PC-3 (cell line): ENCODE measurements at regions of chr3 and their contacts with region 1.

Region 1: DNA sequence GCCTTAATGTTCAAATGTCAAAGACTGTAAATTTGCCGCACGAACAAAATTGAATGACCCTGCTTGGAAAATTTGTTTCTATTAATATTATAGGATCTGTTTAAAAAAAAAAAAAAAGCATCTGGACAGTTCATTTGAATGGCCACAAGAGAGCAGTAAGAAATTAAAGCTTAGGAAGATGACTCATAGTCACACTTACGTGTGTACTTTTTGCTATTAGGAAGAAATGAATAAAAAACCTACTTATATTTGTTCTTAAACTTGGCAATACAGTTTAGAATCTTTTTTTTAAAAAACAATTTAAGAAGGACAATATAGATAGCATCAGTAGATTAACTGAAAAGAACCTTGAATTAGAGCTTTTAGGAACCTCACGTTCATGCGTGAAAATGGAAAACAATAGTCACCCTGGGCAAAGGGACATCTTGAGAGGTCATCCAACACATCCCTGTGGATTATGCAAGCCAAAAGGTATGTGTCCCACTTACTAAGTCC is 621.8 kb downstream of the MECOM start:
- DNase-seq: peak; percentile 64
- ATAC-seq: 0 out of 2 replicates have a peak, but pooled peaks have one; percentile 9
- H3K4me3 ChIP-seq: peak overlapping the region; percentile 24; the same call in 1 of the 2 replicates
- H3K27ac ChIP-seq: no peak overlapping the region
- H3K4me1 ChIP-seq: peaks cover 33% of the 10 kb centered on the region
- H3K27me3 ChIP-seq: no peaks in the 10 kb centered on the region
- CTCF ChIP-seq: peak; percentile 81

Region 2: DNA sequence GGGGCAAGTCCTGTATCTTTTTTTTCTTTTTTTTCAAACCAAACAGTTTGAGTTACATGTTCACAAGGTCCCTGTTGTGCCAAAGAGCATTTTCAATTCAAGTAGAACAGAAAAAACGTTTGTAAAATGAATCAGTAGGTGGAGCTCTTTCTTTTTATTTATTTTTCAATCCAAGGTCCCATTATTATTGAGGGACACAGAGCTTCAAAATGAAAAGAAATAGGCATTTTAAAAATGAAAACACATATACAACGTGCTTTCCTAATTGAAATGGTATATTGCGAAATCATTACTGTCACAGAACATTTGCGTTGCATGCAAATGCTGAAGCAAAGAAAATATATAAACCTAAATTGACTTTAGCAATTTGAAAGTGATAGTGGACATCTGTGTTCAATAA is 89.2 kb before region 1 on chr3:
- CTCF ChIA-PET with region 1: no interaction called
- POLR2A ChIA-PET with region 1: no interaction called
- intact Hi-C with region 1: loop called (anchors 1 kb)
- DNase-seq: peak; percentile 73
- ATAC-seq: peak; percentile 47
- H3K4me3 ChIP-seq: no peak overlapping the region
- H3K27ac ChIP-seq: peak overlapping the region; percentile 89
- H3K4me1 ChIP-seq: peaks cover 34% of the 10 kb centered on the region
- H3K27me3 ChIP-seq: no peaks in the 10 kb centered on the region
- CTCF ChIP-seq: peak; percentile 73

Region 3: GRCh38 chr3:169138849-169139420 is 97.2 kb after region 1 on chr3:
- CTCF ChIA-PET with region 1: no interaction called
- POLR2A ChIA-PET with region 1: no interaction called
- intact Hi-C with region 1: no loop called
- DNase-seq: no peak
- ATAC-seq: no peak
- H3K4me3 ChIP-seq: no peak overlapping the region
- H3K27ac ChIP-seq: no peak overlapping the region
- H3K4me1 ChIP-seq: peaks cover 8% of the 10 kb centered on the region
- H3K27me3 ChIP-seq: no peaks in the 10 kb centered on the region
- CTCF ChIP-seq: no peak

Region 4: DNA sequence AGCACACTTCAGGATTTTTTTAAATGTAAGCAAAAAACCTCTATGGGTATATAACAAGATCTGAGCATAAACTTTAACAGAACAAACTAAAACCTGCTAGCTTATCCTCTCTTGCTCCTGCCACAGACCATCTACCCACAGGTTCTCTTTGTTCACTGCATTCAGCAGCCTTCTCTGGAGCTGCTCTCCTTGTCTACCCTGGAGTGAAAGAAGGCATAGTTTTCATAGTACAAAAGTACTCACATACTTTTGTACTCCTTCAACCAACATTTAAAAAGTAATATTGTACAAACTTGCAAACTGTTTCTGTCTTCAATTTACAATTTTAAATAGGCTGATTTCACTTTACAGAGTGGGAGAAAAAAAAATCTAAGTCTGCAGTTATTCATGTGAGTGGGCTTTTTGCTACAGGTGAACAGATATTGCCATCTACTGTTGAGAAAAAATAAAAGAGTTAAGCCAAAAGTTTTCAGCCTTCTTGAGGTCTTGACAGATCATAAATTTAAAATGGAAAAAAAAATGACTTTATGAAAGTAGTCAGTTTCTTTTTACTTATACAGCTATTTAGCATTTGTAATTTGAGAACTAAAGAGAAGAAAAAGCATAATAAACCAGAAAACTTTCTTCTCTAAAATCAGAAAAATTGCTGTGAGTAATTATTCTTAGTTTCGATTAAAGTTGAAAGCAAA is 702.8 kb after region 1 on chr3:
- CTCF ChIA-PET with region 1: no interaction called
- POLR2A ChIA-PET with region 1: no interaction called
- intact Hi-C with region 1: loop called (anchors 2 kb)
- DNase-seq: peak; percentile 66
- ATAC-seq: 0 out of 2 replicates have a peak, but pooled peaks have one; percentile 39
- H3K4me3 ChIP-seq: no peak overlapping the region
- H3K27ac ChIP-seq: no peak overlapping the region
- H3K4me1 ChIP-seq: peaks cover 20% of the 10 kb centered on the region
- H3K27me3 ChIP-seq: no peaks in the 10 kb centered on the region
- CTCF ChIP-seq: peak; percentile 83